Mammary epithelial cell (primary cell): ENCODE measurements at regions of chr15 and their contacts with region 1.

Region 1: GRCh38 chr15:81336568-81336967 is 12.6 kb upstream of the STARD5 start:
- DNase-seq: peak; percentile 32
- H3K4me3 ChIP-seq: no peak overlapping the region
- H3K27ac ChIP-seq: no peak overlapping the region
- H3K4me1 ChIP-seq: peaks cover 18% of the 10 kb centered on the region
- H3K27me3 ChIP-seq: no peaks in the 10 kb centered on the region
- CTCF ChIP-seq: peak; percentile 39 to 47

Region 2: DNA sequence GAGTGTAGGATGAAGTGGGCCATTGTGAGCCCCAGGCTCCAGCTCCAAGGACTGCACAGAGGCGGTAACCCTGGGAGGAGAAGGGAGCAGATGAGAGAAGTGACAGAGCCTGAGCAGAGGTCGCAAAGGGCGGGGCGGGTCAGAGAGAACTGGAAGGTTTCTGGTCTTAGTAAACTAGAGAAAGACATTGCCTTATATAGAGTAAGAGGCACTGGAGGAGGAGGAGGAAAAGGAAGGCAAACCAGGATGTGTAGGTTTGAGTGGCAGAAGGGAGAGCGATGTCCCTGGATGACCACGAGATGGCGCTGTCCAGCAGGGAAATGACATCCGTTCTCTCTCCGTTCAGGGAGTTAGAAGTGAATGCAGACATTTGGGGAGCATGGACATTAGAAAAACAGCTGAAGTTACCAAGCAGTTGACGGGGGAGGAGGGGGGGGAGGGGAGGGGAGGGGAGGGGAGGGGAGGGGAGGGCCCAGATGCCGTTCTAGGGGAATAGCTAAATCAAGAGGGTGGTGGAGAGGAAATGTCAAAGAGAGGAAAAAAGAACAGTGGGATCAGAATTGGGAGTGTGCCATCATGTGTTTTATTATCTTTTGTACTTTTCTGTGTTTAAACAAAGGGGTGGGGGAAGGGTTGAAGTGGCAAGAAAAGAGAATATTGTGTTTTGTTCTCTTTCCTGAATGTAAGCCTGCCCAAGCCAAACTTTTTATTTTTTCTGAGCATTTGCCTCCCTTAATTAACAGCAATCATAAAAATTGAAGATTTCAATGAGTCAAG is 61.4 kb before region 1 on chr15:
- CTCF ChIA-PET with region 1: no interaction called
- dilution Hi-C with region 1: no loop called
- in situ Hi-C with region 1: loop called in 1 of 2 experiments (anchors 5 kb)
- intact Hi-C with region 1: loop called (anchors 1 kb)
- DNase-seq: peak; percentile 54
- H3K4me3 ChIP-seq: no peak overlapping the region
- H3K27ac ChIP-seq: no peak overlapping the region
- H3K4me1 ChIP-seq: no peaks in the 10 kb centered on the region
- H3K27me3 ChIP-seq: no peaks in the 10 kb centered on the region
- CTCF ChIP-seq: peak; percentile 93 to 94

Region 3: DNA sequence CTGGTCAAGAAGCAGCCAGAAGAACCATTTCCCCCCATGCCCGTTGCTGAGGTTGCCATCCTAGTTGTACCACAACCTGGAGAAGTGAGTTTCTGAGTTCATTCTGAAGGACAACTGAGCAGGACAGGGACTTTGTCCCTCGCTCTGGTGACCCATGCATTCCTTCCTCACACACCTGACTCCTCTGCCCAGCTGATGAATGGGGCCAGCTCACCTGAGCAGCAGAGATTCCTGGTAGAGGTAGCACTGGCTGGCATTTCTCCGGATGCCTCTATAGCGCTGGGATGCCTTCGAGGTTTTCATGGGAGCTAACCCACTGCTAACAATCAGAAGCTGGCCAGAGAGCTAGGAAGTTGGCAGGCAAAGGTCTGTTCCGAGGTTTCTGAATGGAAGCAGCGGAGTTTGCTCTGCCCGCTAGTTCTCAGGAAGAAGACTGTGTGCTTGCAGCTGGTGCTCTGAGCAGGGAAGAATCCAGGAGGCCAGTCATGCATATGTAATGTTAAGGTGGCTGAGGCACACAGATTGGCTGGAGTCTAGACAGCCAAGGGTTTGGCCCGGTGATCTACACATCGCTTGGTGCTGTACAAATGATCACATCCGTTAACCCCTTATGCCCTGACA is 37.3 kb after region 1 on chr15 and contains the start of gene TMC3:
- CTCF ChIA-PET with region 1: no interaction called
- dilution Hi-C with region 1: loop called (anchors 5 kb)
- in situ Hi-C with region 1: no loop called
- intact Hi-C with region 1: no loop called
- DNase-seq: no peak
- H3K4me3 ChIP-seq: no peak within 1 kb of the TSS
- H3K27ac ChIP-seq: no peak within 1 kb of the TSS
- H3K4me1 ChIP-seq: no peaks in the 10 kb centered on the region
- H3K27me3 ChIP-seq: peaks cover 2% of the 10 kb centered on the region
- CTCF ChIP-seq: no peak
- total RNA-seq, gene TMC3: not detected